SK-N-SH (cell line): ENCODE measurements at regions of chr5 and their contacts with region 1.

Region 1: DNA sequence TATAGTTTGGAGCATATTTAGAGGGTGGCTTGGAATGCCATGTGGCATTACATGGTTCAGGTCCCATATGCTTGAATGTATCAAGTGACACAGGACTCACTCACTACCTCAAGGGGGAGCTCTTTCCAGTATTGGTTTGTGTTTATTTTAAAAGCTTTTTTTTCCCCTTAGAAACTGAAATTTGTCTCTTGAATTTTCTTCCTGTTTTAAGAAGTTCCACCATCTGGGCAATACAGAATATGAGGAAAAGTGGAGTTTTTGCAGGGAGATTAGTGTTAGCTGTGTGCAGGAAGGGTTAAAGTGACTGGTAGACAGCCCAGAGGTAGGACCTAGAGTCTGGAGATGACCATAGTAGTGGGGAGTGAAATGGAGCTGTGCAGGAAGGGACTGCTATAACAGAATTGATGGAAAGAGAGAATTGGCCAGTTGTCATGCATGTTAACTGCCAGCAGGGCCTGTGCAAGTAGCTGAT is 36.6 kb downstream of the CTNNA1 start:
- DNase-seq: peak; percentile 52
- H3K4me3 ChIP-seq: no peak overlapping the region; a peak in 1 of 4 replicates
- H3K27ac ChIP-seq: no peak overlapping the region
- H3K4me1 ChIP-seq: peaks cover 4 to 17% of the 10 kb centered on the region in 2 experiments; a peak in 3 of 4 replicates
- H3K27me3 ChIP-seq: no peaks in the 10 kb centered on the region
- CTCF ChIP-seq: peak; percentile 70
- EP300 ChIP-seq: no peak
- RAD21 ChIP-seq: peak; percentile 52

Region 2: GRCh38 chr5:138760448-138761110 is 29.2 kb before region 1 on chr5:
- CTCF ChIA-PET with region 1: interaction called, 13 read pairs
- POLR2A ChIA-PET with region 1: no interaction called
- DNase-seq: no peak
- H3K4me3 ChIP-seq: no peak overlapping the region
- H3K27ac ChIP-seq: no peak overlapping the region
- H3K4me1 ChIP-seq: peaks cover 0 to 9% of the 10 kb centered on the region in 2 experiments; a peak in 1 of 4 replicates
- H3K27me3 ChIP-seq: no peaks in the 10 kb centered on the region
- CTCF ChIP-seq: no peak
- EP300 ChIP-seq: no peak
- RAD21 ChIP-seq: no peak

Region 3: DNA sequence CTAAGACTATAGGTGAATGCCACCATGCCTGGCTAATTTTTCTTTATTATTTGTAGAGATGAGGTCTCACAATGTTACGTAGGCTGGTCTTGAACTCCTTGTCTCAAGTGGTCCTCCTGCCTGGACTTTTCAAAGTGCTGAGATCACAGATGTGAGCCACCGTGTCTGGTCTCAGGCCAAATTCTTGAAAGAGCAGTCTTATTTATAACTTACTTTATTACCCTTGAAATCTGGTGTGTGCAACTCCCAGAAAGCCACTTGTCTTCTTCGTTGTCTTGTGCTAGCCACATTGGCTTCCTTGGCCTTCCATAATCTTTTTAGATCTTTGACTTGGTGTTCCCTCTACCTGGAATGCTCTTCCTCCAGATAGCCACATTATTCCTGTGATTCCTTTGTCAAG is 13.5 kb after region 1 on chr5:
- CTCF ChIA-PET with region 1: interaction called, 18 read pairs
- POLR2A ChIA-PET with region 1: no interaction called
- DNase-seq: no peak
- H3K4me3 ChIP-seq: no peak overlapping the region
- H3K27ac ChIP-seq: no peak overlapping the region
- H3K4me1 ChIP-seq: 0 out of 4 replicates have a peak, but pooled peaks cover 0 to 5% of the 10 kb centered on the region in 2 experiments
- H3K27me3 ChIP-seq: no peaks in the 10 kb centered on the region
- CTCF ChIP-seq: no peak
- EP300 ChIP-seq: no peak
- RAD21 ChIP-seq: no peak

Region 4: GRCh38 chr5:138809391-138809790 is 19.6 kb after region 1 on chr5:
- CTCF ChIA-PET with region 1: interaction called, 11 read pairs
- POLR2A ChIA-PET with region 1: no interaction called
- DNase-seq: no peak
- H3K4me3 ChIP-seq: no peak overlapping the region
- H3K27ac ChIP-seq: no peak overlapping the region
- H3K4me1 ChIP-seq: peaks cover 0 to 10% of the 10 kb centered on the region in 2 experiments; a peak in 1 of 4 replicates
- H3K27me3 ChIP-seq: no peaks in the 10 kb centered on the region
- CTCF ChIP-seq: no peak
- EP300 ChIP-seq: no peak
- RAD21 ChIP-seq: no peak

Region 5: GRCh38 chr5:138824924-138825863 is 35.4 kb after region 1 on chr5:
- CTCF ChIA-PET with region 1: interaction called, 28 read pairs
- POLR2A ChIA-PET with region 1: no interaction called
- DNase-seq: peak; percentile 61
- H3K4me3 ChIP-seq: no peak overlapping the region
- H3K27ac ChIP-seq: peak overlapping the region; percentile 39 to 52; a peak in 3 of 4 replicates
- H3K4me1 ChIP-seq: no peaks in the 10 kb centered on the region; a peak in 2 of 4 replicates
- H3K27me3 ChIP-seq: no peaks in the 10 kb centered on the region
- CTCF ChIP-seq: peak; percentile 69
- EP300 ChIP-seq: no peak
- RAD21 ChIP-seq: peak; percentile 59; the same call in 1 of the 2 replicates